HCT116 (cell line): ENCODE measurements at regions of chr19 and their contacts with region 1.

Region 1: GRCh38 chr19:57682226-57682766 is 519 bp downstream of the ZNF551 start:
- DNase-seq: no peak
- ATAC-seq: peak; percentile 37; the same call in 1 of the 2 replicates
- H3K4me3 ChIP-seq: peak overlapping the region; percentile 90 to 97
- H3K27ac ChIP-seq: peak overlapping the region; percentile 69
- H3K4me1 ChIP-seq: peaks cover 0 to 12% of the 10 kb centered on the region in 2 experiments; a peak in 3 of 4 replicates
- H3K27me3 ChIP-seq: no peaks in the 10 kb centered on the region
- CTCF ChIP-seq: no peak
- POLR2A ChIP-seq: no peak
- RAD21 ChIP-seq: no peak

Region 2: GRCh38 chr19:57632987-57633831 is 49.1 kb before region 1 on chr19 and contains the start of gene ZNF211:
- CTCF ChIA-PET with region 1: interaction called, 4 read pairs
- POLR2A ChIA-PET with region 1: no interaction called
- RAD21 ChIA-PET with region 1: no interaction called
- intact Hi-C with region 1: loop called (anchors 2 kb)
- DNase-seq: peak; percentile 88
- ATAC-seq: peak; percentile 99
- H3K4me3 ChIP-seq: peak within 1 kb of the TSS; percentile 76 to 79
- H3K27ac ChIP-seq: peak within 1 kb of the TSS; percentile 43; the same call in 1 of the 2 replicates
- H3K4me1 ChIP-seq: peaks cover 3 to 7% of the 10 kb centered on the region in 2 experiments; a peak in 2 of 4 replicates
- H3K27me3 ChIP-seq: no peaks in the 10 kb centered on the region
- CTCF ChIP-seq: no peak
- POLR2A ChIP-seq: no peak
- RAD21 ChIP-seq: no peak
- total RNA-seq, gene ZNF211: 6.7 TPM

Region 3: DNA sequence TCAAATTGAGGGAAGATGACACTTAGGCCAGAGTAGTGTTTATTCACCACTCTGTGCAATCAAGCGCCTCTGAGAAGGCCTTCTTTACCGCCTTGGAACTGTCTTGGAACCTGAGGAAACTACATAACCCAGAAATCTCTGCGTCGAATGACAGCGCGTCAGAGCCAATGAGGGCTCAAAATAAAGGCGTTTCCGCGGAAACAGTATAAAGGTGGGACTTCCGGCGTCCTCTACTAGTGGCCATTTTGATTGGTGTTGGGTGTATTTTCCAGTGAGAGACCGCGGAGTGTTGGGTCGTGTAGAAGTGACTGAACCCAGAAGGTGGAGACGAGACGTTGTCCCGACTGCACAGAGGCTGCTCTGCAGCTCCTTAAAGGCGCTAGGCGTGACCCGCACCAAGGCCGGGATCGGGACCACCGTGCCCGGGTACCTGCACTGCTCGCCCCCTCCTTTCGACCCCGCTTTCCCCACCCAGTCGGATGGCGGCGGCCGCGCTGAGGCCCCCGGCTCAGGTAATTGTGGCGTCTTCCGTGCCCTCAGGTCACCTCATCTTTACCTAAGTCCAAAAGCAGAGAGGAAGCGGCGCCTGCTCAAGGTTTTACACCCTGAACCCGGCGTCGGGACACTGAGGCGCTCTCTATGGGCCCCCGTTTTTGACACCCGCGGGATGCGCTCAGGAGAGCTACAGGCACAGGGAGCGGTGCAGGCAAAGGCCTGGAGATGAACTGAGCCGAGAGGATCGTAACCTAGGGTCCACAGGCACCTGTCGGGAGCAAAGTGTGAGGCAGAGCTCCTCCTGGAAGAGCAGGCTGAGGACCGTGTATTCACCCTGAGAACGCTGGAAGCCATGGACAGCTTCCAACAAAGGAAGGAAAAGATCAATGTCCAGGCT is 64.5 kb after region 1 on chr19 and contains the start of gene ZNF776:
- CTCF ChIA-PET with region 1: interaction called, 7 read pairs
- POLR2A ChIA-PET with region 1: interaction called, 10 read pairs
- RAD21 ChIA-PET with region 1: no interaction called
- intact Hi-C with region 1: loop called (anchors 5 kb)
- DNase-seq: peak; percentile 86
- ATAC-seq: peak; percentile 97
- H3K4me3 ChIP-seq: peak within 1 kb of the TSS; percentile 87 to 88
- H3K27ac ChIP-seq: peak within 1 kb of the TSS; percentile 64
- H3K4me1 ChIP-seq: peaks cover 0 to 8% of the 10 kb centered on the region in 2 experiments; a peak in 1 of 4 replicates
- H3K27me3 ChIP-seq: no peaks in the 10 kb centered on the region
- CTCF ChIP-seq: no peak
- POLR2A ChIP-seq: peak; percentile 48
- RAD21 ChIP-seq: no peak
- total RNA-seq, gene ZNF776: 8.6 TPM

Region 4: DNA sequence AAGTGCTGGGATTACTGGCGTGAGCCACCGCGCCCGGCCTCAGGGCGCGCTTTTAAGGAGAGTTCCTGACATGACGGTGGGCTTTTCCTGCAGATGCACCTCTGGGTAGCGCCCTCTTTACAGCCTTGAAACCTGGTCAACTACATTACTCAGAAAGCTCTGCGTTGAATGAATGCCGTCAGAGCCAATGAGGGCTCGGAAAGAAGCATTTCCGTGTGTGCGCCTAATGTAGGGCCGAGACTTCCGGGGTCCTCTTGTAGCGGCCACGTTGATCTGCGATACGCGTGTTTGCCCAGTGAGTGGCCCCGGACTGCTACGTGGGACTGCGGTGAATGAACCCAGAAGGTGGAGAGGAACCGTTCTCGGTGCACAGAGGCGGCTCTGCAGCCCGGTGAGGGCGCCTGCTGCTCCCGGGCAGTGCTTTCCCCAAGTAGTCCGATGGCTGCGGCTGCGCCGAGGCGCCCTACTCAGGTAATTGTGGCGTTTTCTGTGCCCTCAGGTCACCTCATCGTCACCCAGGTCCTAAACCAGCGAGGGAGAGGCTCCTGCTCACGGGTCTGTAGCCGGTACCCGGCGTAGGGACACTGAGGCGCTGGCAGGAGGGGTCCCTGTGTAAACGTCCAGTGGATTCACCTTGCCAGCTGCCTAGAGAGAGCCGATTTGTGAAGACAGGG is 137.3 kb after region 1 on chr19:
- CTCF ChIA-PET with region 1: interaction called, 3 read pairs
- POLR2A ChIA-PET with region 1: interaction called, 5 read pairs
- RAD21 ChIA-PET with region 1: no interaction called
- intact Hi-C with region 1: loop called (anchors 5 kb)
- DNase-seq: peak; percentile 90
- ATAC-seq: peak; percentile 81
- H3K4me3 ChIP-seq: peak overlapping the region; percentile 71 to 95
- H3K27ac ChIP-seq: peak overlapping the region; percentile 80
- H3K4me1 ChIP-seq: peaks cover 0 to 20% of the 10 kb centered on the region in 2 experiments; a peak in 3 of 4 replicates
- H3K27me3 ChIP-seq: no peaks in the 10 kb centered on the region
- CTCF ChIP-seq: 0 out of 6 replicates have a peak, but pooled peaks of 1 of the 3 experiments have one; percentile 10
- POLR2A ChIP-seq: no peak
- RAD21 ChIP-seq: no peak